GM13977 (cell line): ENCODE measurements at regions of chr2 and their contacts with region 1.

Region 1: DNA sequence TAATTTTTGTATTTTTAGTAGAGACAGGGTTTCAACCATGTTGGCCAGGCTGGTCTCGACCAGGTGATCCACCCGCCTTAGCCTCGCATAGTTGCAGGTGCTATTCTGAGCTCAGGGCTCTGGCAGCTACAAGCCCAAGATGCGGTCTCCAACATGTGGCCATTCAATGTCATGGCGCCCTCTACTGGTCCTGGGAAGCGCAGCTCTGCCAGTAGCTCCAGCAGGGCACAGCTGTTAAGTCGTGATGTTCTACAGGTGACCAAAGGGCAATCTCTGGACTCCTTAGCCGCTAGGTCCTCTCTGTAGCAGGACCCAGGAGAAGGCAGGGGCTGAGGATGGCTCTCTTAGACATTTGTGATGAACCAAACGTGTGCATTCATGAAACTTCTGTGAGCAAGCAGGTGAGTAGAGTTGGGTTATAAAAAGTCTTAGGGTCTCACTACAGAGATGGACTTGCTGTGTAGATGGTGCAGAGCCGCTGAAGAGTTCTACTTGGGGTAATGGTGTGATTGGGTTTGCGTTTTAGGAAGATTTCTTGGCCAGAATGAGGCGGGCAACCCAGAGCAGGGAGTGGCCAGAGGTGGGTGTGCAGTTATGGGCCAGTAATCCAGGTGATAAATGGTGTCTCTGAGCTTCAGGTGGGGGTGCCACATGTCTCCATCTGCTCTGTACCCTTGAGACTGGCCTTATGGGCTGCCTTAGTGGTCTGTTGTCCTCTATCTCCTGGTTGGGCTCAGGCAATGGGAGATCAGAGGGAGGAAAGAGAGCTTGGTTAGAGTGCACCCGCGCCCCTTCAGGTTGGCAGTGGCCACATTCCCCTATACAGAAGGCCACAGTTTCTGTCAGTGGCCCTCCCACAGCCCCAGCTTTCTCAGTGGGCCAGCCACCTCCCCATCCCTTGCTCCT is 31.0 kb downstream of the IL37 start:
- DNase-seq: peak; percentile 69
- CTCF ChIP-seq: peak; percentile 98

Region 2: DNA sequence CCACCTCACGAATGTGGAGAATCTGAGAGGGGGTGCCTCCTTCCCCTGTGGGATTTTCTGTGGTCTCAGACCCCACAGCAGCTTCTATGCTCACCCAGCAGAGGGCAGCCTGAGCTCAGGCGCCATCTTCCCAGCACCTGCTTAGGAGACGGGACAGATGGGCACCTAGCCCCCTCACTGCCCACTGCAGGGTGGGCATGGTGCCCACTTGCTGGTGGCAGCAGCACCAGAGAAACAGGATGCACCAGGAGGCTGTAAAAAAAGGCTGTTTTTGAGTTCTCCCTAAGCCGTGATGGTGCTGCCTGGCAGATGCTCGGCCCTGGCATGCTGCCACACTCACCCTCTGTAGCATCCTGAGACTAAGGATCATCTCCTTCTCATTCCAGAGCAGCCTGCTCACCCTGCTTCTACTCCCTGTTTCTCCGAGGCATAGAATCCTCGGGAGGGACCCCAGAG is 315.4 kb before region 1 on chr2:
- in situ Hi-C with region 1: loop called (anchors 25 kb)
- DNase-seq: peak; percentile 66
- CTCF ChIP-seq: peak; percentile 94

Region 3: DNA sequence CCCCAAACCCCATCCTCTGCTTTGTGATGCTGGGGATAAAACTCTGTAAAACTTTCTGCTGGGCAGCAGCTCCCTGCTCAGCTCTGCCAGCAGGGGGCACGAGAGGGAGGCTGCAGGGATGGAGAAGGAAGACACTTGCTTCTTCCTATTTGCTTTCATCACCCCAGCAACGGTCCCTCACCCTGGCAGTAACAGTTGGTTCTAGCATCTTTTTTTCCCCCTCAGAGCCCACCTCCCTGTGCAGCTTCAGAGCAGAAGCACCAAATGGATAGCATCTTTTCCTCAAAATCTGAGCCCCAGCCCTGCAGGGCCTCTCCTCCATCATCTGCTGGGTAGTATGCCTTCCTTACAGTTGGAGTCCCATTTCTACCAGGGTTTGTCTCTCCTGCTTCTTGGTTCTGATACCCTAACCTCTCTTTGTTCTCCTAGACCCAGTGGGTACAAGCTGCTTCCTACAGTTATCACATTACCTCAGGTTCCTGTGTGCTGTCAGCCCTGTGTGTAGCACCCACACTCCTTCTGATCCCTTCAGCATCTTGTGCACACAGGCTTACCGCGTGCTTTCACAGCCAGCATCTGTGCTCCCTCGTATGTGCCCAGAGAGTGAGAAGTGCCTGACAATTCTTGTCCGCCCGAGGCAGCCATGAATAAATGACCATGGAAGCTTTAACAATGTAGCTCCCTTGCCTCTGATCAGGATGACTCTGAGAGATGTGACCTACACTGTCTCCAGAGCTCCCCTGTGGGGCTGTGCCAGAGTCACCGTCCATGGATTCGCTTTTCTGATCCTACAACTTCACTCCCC is 192.0 kb before region 1 on chr2:
- in situ Hi-C with region 1: loop called (anchors 10 kb)
- DNase-seq: peak; percentile 66
- CTCF ChIP-seq: peak; percentile 97

Region 4: DNA sequence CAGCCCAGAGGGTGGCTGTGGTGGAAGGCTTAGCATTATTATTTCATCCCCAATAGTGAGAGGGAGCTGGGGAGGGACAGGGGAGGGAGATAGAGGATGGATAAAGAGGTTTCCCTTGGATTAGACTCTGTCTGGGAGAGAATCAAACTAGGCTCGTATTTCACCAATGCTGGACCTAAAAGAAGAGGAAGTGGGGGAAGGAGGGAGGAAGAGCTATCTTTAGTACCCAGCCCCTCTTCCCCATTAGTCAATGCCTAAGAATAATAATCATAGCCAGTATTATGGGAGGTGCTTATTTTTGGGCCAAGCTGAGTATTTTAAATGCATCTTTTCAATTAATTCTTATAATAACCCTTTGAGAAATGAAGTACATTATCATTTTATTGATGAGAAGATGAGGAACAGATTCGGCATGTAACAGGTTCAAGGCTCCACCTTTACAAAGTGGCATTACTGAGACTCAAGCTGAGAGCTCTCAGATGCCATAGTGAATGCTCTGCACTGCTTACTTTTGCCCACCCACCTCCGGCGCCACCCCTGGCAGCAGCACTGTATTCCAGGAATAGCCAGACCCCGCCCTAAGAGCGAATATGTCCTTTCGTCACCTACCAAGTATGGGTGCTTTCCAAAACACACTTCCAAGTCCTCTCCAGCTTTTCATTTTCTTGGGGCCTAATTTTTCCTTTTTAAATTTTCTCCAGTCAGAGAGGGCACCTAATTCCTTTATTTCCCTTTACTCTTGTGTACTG is 315.7 kb after region 1 on chr2:
- in situ Hi-C with region 1: no loop called
- DNase-seq: no peak
- CTCF ChIP-seq: no peak